ENCODE measurements at regions of chr1 and their contacts with region 1.

Region 1: GRCh38 chr1:68120136-68120791 is 69.8 kb upstream of the DIRAS3 start:
- DNase-seq: peak in 4 of 14 experiments; percentile 15 to 57 (median 37)
- ATAC-seq: no peak
- H3K4me3 ChIP-seq: no peak overlapping the region
- H3K4me3 Mint-ChIP-seq: no peak overlapping the region
- H3K27ac ChIP-seq: no peak overlapping the region
- H3K27ac Mint-ChIP-seq: no peak overlapping the region
- H3K4me1 ChIP-seq: peaks cover 2% of the 10 kb centered on the region
- H3K4me1 Mint-ChIP-seq: no peaks in the 10 kb centered on the region
- H3K27me3 ChIP-seq: no peaks in the 10 kb centered on the region
- H3K27me3 Mint-ChIP-seq: no peaks in the 10 kb centered on the region
- CTCF ChIP-seq: peak; percentile 47

Region 2: DNA sequence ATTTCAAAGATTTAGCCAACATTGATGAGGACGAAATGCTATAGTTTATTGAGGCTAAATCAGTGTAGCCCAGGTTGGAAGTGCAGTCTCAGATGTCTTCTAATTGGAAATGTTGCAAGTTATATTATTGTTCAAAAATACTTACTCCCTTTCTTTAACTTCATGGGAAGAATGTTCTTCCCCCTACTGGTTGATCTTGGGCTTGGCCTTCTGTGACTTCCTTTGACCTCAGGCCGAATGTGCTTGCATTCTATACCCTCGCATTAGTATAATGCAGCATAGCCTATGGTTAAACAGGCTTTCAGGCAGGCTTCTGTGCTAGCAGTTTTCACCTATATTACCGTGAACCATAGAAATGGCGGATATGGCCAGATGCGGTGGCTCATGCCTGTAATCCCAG is 252.2 kb after region 1 on chr1:
- CTCF ChIA-PET with region 1: no interaction called
- POLR2A ChIA-PET with region 1: no interaction called
- intact Hi-C with region 1: no loop called
- DNase-seq: no peak
- ATAC-seq: no peak
- H3K4me3 ChIP-seq: no peak overlapping the region
- H3K4me3 Mint-ChIP-seq: no peak overlapping the region
- H3K27ac ChIP-seq: no peak overlapping the region
- H3K27ac Mint-ChIP-seq: no peak overlapping the region
- H3K4me1 ChIP-seq: no peaks in the 10 kb centered on the region
- H3K4me1 Mint-ChIP-seq: no peaks in the 10 kb centered on the region
- H3K27me3 ChIP-seq: no peaks in the 10 kb centered on the region
- H3K27me3 Mint-ChIP-seq: no peaks in the 10 kb centered on the region
- CTCF ChIP-seq: no peak

Region 3: GRCh38 chr1:69737527-69738185 is 1617.4 kb after region 1 on chr1:
- CTCF ChIA-PET with region 1: no interaction called
- POLR2A ChIA-PET with region 1: no interaction called
- intact Hi-C with region 1: loop called (anchors 5 to 10 kb)
- DNase-seq: peak in 3 of 14 experiments; percentile 26 to 59 (median 28)
- ATAC-seq: no peak
- H3K4me3 ChIP-seq: no peak overlapping the region
- H3K4me3 Mint-ChIP-seq: no peak overlapping the region
- H3K27ac ChIP-seq: no peak overlapping the region
- H3K27ac Mint-ChIP-seq: no peak overlapping the region
- H3K4me1 ChIP-seq: no peaks in the 10 kb centered on the region
- H3K4me1 Mint-ChIP-seq: no peaks in the 10 kb centered on the region
- H3K27me3 ChIP-seq: no peaks in the 10 kb centered on the region
- H3K27me3 Mint-ChIP-seq: no peaks in the 10 kb centered on the region
- CTCF ChIP-seq: no peak

Region 4: DNA sequence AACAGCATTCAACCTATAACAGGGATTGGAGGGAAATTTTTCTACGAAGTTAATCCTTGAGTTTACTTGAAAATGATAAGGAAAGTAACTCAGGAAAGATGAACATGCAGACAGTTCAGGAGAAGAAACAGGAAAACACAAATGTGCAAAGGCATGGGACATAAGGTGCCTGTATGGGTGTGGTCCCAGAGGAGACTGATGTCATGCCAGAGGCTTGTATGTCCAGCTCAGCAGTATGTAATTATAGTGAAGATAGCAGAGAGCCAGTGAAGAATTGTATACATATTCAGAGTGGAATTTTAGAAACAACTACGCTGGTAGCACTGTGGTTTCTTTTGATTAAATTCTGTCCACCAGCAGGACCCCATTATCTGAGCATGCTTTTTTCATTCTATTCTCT is 1626.9 kb after region 1 on chr1:
- CTCF ChIA-PET with region 1: no interaction called
- POLR2A ChIA-PET with region 1: no interaction called
- intact Hi-C with region 1: loop called in 1 of 2 experiments (anchors 10 kb)
- DNase-seq: no peak
- ATAC-seq: no peak
- H3K4me3 ChIP-seq: no peak overlapping the region
- H3K4me3 Mint-ChIP-seq: no peak overlapping the region
- H3K27ac ChIP-seq: no peak overlapping the region
- H3K27ac Mint-ChIP-seq: no peak overlapping the region
- H3K4me1 ChIP-seq: no peaks in the 10 kb centered on the region
- H3K4me1 Mint-ChIP-seq: no peaks in the 10 kb centered on the region
- H3K27me3 ChIP-seq: no peaks in the 10 kb centered on the region
- H3K27me3 Mint-ChIP-seq: no peaks in the 10 kb centered on the region
- CTCF ChIP-seq: no peak

Measured in CD4-positive, alpha-beta T cell (primary cell).